CD4-positive, alpha-beta memory T cell (primary cell): ENCODE measurements at regions of chr2 and their contacts with region 1.

Region 1: DNA sequence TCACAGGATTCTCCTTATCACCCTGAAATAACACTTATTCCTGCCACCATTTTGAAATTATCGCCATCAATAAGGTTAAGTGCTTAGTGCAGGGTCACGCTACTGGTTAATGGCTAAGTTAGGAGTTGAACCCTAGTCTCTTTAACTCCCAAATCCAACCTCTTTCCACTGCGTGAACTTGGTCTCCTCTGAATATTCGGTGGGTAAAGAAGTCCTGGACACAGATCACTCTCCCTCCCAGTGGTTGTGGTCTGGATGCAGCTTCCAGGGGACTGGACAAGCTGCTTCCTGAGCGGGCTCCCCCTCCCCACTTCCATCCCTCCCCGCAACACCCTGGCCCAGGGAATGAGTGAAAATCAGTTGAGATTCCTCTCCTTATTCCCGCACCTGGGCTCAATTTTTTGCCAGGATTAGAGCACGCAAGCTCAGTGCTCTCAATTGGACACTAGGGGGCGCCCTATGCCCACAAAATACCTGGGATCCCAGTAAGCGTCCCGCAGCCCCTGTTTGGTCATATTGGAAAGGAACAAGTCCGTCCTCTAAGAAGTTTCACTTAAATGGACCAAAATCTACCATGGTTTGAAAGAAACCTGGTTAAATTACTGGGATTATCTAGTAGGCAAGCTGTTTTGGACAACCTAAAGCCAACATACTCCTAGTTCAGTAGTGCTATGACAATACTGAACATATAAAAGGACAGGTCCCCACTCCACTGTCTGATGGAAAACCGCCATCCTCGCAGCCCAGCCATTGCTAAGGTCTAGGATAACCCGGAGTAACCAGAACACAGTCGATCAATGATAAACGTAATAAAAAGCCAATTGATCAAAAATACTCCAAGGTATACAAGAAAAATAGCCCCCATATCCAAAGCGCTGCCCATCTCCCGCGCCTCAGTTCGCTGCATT is 40.4 kb downstream of the DHRS9 start:
- DNase-seq: peak; percentile 59 to 72 (median 69)
- H3K4me3 ChIP-seq: no peak overlapping the region
- H3K4me3 Mint-ChIP-seq: peak overlapping the region in 4 of 8 donors; percentile 45 to 55 (median 48)
- H3K27ac ChIP-seq: no peak overlapping the region
- H3K27ac Mint-ChIP-seq: peak overlapping the region in 3 of 7 donors; percentile 1 to 64 (median 16)
- H3K4me1 ChIP-seq: peaks cover 54% of the 10 kb centered on the region
- H3K4me1 Mint-ChIP-seq: peaks cover 41 to 52% (median 47%) of the 10 kb centered on the region in 4 donors
- H3K27me3 ChIP-seq: no peaks in the 10 kb centered on the region
- H3K27me3 Mint-ChIP-seq: peaks cover 0 to 2% of the 10 kb centered on the region in 2 donors

Region 2: GRCh38 chr2:168890006-168890782 is 219.6 kb before region 1 on chr2 and contains the start of gene SPC25:
- CTCF ChIA-PET with region 1: no interaction called
- POLR2A ChIA-PET with region 1: no interaction called
- intact Hi-C with region 1: loop called (anchors 5 kb)
- DNase-seq: peak; percentile 86 to 90 (median 87)
- H3K4me3 ChIP-seq: peak within 1 kb of the TSS; percentile 38 to 58
- H3K4me3 Mint-ChIP-seq: peak within 1 kb of the TSS; percentile 93 to 98 (median 94)
- H3K27ac ChIP-seq: peak within 1 kb of the TSS; percentile 4
- H3K27ac Mint-ChIP-seq: peak within 1 kb of the TSS; percentile 10 to 88 (median 84)
- H3K4me1 ChIP-seq: peaks cover 6% of the 10 kb centered on the region
- H3K4me1 Mint-ChIP-seq: peaks cover 5 to 12% (median 10%) of the 10 kb centered on the region in 4 donors
- H3K27me3 ChIP-seq: no peaks in the 10 kb centered on the region
- H3K27me3 Mint-ChIP-seq: peaks cover 2 to 4% of the 10 kb centered on the region in 2 donors
- total RNA-seq, gene SPC25: 0.33 TPM in 1 of 2 experiments, not detected in the other

Region 3: DNA sequence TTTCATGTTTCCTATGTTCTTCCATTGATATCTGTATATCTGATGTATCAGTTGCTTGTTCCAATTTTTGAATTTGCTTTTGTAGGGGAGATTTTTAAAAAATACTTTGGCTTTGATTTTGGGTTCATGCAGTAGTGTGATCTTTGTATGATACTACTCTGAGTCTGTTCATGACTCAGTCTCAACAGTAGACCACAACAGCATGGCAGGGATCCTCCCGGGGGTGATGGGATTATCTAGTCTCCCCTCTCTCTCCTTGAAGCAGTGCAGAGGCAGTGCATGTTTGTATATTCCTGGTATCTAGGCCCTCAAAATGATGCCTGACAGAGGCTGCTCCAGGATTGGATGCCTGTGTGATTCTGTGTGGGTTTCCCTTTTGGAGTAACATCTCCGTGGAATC is 153.4 kb before region 1 on chr2:
- CTCF ChIA-PET with region 1: interaction called, 75 read pairs
- POLR2A ChIA-PET with region 1: interaction called, 4 read pairs
- intact Hi-C with region 1: loop called (anchors 1 kb)
- DNase-seq: no peak
- H3K4me3 ChIP-seq: no peak overlapping the region
- H3K4me3 Mint-ChIP-seq: no peak overlapping the region
- H3K27ac ChIP-seq: no peak overlapping the region
- H3K27ac Mint-ChIP-seq: no peak overlapping the region
- H3K4me1 ChIP-seq: no peaks in the 10 kb centered on the region
- H3K4me1 Mint-ChIP-seq: peaks cover 0 to 1% (median under 1%) of the 10 kb centered on the region in 4 donors
- H3K27me3 ChIP-seq: no peaks in the 10 kb centered on the region
- H3K27me3 Mint-ChIP-seq: peaks cover 5 to 11% of the 10 kb centered on the region in 2 donors

Region 4: DNA sequence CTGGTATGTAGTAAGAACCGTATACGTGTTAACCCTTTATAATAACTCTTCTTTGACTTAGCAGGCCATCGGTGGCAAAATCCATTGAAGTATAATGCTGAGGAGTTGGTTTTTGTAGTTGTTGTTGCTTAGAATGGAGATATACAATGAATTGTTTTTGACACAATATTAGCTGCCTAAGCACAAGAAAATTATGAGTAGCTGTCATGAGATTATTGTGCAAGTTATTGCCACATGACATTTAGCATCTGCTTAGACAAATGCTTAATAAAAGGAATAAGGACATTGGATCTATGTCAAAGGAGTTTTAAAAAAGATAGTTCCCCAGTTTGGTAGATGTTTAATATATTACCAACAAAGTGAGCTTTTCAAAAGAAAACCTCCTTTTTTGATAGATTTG is 138.5 kb before region 1 on chr2:
- CTCF ChIA-PET with region 1: interaction called, 62 read pairs
- POLR2A ChIA-PET with region 1: no interaction called
- intact Hi-C with region 1: no loop called
- DNase-seq: no peak
- H3K4me3 ChIP-seq: no peak overlapping the region
- H3K4me3 Mint-ChIP-seq: no peak overlapping the region
- H3K27ac ChIP-seq: no peak overlapping the region
- H3K27ac Mint-ChIP-seq: no peak overlapping the region
- H3K4me1 ChIP-seq: peaks cover 3% of the 10 kb centered on the region
- H3K4me1 Mint-ChIP-seq: peaks cover 3 to 8% (median 5%) of the 10 kb centered on the region in 4 donors
- H3K27me3 ChIP-seq: no peaks in the 10 kb centered on the region
- H3K27me3 Mint-ChIP-seq: no peaks in the 10 kb centered on the region

Region 5: DNA sequence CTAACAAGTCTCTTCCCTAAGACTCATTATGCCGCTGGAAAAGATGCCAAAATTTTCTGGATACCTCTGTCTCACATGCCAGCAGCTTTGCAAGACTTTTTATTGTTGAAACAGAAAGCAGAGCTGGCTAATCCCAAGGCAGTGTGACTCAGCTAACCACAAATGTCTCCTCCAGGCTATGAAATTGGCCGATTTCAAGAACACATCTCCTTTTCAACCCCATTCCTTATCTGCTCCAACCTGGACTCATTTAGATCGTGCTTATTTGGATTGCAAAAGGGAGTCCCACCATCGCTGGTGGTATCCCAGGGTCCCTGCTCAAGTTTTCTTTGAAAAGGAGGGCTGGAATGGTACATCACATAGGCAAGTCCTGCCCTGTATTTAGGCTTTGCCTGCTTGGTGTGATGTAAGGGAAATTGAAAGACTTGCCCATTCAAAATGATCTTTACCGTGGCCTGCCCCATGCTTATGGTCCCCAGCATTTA is 14.1 kb before region 1 on chr2:
- CTCF ChIA-PET with region 1: interaction called, 35 read pairs
- POLR2A ChIA-PET with region 1: interaction called, 12 read pairs
- intact Hi-C with region 1: no loop called
- DNase-seq: no peak
- H3K4me3 ChIP-seq: no peak overlapping the region
- H3K4me3 Mint-ChIP-seq: peak overlapping the region in 3 of 8 donors; percentile 15 to 49 (median 43)
- H3K27ac ChIP-seq: no peak overlapping the region
- H3K27ac Mint-ChIP-seq: peak overlapping the region in 1 of 7 donors; percentile 9
- H3K4me1 ChIP-seq: peaks cover 10% of the 10 kb centered on the region
- H3K4me1 Mint-ChIP-seq: peaks cover 7 to 16% (median 15%) of the 10 kb centered on the region in 4 donors
- H3K27me3 ChIP-seq: no peaks in the 10 kb centered on the region
- H3K27me3 Mint-ChIP-seq: peaks cover 4 to 5% of the 10 kb centered on the region in 2 donors

Region 6: GRCh38 chr2:169141713-169142352 is 32.1 kb after region 1 on chr2:
- CTCF ChIA-PET with region 1: interaction called, 423 read pairs
- POLR2A ChIA-PET with region 1: interaction called, 14 read pairs
- intact Hi-C with region 1: loop called (anchors 1 kb)
- DNase-seq: peak; percentile 41 to 63 (median 54)
- H3K4me3 ChIP-seq: no peak overlapping the region
- H3K4me3 Mint-ChIP-seq: no peak overlapping the region
- H3K27ac ChIP-seq: no peak overlapping the region
- H3K27ac Mint-ChIP-seq: no peak overlapping the region
- H3K4me1 ChIP-seq: no peaks in the 10 kb centered on the region
- H3K4me1 Mint-ChIP-seq: peaks cover 0 to 3% (median 0%) of the 10 kb centered on the region in 4 donors
- H3K27me3 ChIP-seq: no peaks in the 10 kb centered on the region
- H3K27me3 Mint-ChIP-seq: no peaks in the 10 kb centered on the region

Region 7: GRCh38 chr2:169184074-169184473 is 74.3 kb after region 1 on chr2:
- CTCF ChIA-PET with region 1: no interaction called
- POLR2A ChIA-PET with region 1: no interaction called
- intact Hi-C with region 1: no loop called
- DNase-seq: no peak
- H3K4me3 ChIP-seq: no peak overlapping the region
- H3K4me3 Mint-ChIP-seq: no peak overlapping the region
- H3K27ac ChIP-seq: no peak overlapping the region
- H3K27ac Mint-ChIP-seq: no peak overlapping the region
- H3K4me1 ChIP-seq: no peaks in the 10 kb centered on the region
- H3K4me1 Mint-ChIP-seq: no peaks in the 10 kb centered on the region
- H3K27me3 ChIP-seq: no peaks in the 10 kb centered on the region
- H3K27me3 Mint-ChIP-seq: peaks cover 3 to 8% of the 10 kb centered on the region in 2 donors

Region 8: DNA sequence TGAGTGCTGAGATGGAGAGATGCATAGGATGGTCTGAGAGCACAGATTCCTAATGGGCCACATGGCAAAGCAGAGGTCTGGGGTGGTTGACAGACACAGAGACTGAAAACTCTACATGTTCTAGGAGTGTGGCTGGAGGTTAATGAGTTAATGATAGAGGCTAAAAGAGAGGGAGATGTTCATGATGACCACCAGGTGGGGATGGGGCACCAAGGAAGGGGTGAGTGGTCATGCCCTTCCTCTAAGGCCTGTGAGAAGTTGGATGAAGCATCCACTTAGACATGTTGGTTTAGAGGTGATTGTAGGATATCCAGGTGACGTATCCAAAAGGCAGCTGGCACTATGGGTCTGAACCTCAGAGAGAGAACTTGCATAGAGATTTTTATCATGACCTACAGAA is 150.5 kb after region 1 on chr2:
- CTCF ChIA-PET with region 1: no interaction called
- POLR2A ChIA-PET with region 1: no interaction called
- intact Hi-C with region 1: no loop called
- DNase-seq: no peak
- H3K4me3 ChIP-seq: no peak overlapping the region
- H3K4me3 Mint-ChIP-seq: no peak overlapping the region
- H3K27ac ChIP-seq: no peak overlapping the region
- H3K27ac Mint-ChIP-seq: no peak overlapping the region
- H3K4me1 ChIP-seq: no peaks in the 10 kb centered on the region
- H3K4me1 Mint-ChIP-seq: peaks cover 0 to 1% (median 0%) of the 10 kb centered on the region in 4 donors
- H3K27me3 ChIP-seq: no peaks in the 10 kb centered on the region
- H3K27me3 Mint-ChIP-seq: peaks cover 5 to 8% of the 10 kb centered on the region in 2 donors

Region 9: DNA sequence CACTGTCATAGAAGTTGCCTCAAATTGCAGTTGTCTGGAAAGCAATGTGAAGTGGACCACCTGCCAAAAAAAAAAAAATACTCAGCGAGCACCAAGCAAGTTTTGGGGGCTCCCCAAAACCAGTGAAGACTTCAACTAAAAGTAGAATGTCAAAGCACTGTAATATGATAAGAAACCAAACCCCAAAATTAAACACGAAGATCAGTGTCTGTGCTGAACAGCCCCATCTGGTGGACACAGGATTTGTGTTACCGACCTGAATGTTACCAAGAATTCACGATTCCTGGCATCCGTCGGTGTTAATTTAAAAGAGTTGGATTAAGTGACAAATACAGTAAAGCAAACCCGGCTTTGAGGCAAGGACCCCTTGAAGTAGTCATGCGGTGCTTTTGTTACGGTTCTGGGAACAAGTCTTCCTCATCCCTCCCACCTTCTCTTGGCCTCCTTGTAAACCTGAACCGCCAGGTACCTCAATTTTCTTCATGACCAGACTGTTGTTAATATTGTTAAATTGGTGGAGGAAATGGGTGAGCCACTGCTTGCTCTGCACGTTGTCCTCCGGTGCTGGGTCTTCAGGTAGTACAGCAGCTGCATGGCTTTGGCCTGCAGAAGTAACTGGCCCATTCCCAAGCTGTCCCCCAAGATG is 657.6 kb after region 1 on chr2:
- CTCF ChIA-PET with region 1: interaction called, 10 read pairs
- POLR2A ChIA-PET with region 1: no interaction called
- intact Hi-C with region 1: no loop called
- DNase-seq: peak; percentile 48 to 59 (median 56)
- H3K4me3 ChIP-seq: no peak overlapping the region
- H3K4me3 Mint-ChIP-seq: peak overlapping the region; percentile 22 to 68 (median 54)
- H3K27ac ChIP-seq: no peak overlapping the region
- H3K27ac Mint-ChIP-seq: peak overlapping the region in 3 of 7 donors; percentile 20 to 57 (median 20)
- H3K4me1 ChIP-seq: peaks cover 19% of the 10 kb centered on the region
- H3K4me1 Mint-ChIP-seq: peaks cover 8 to 20% (median 13%) of the 10 kb centered on the region in 4 donors
- H3K27me3 ChIP-seq: no peaks in the 10 kb centered on the region
- H3K27me3 Mint-ChIP-seq: peaks cover 4 to 15% of the 10 kb centered on the region in 2 donors